Activated naive CD4-positive, alpha-beta T cell treated with anti-CD3 and anti-CD28 coated beads, Interleukin-2, amount 10 ng/mL, durations not matched to agents 7 days and 5 days (primary cell): ENCODE measurements at regions of chr12 and their contacts with region 1.

Region 1: GRCh38 chr12:109428037-109428629 is 49.0 kb downstream of the KCTD10 start:
- DNase-seq: peak; percentile 81
- H3K4me3 Mint-ChIP-seq: no peak overlapping the region
- H3K27ac Mint-ChIP-seq: no peak overlapping the region
- H3K4me1 Mint-ChIP-seq: peaks cover 6% of the 10 kb centered on the region
- H3K27me3 Mint-ChIP-seq: peaks cover 4% of the 10 kb centered on the region

Region 2: DNA sequence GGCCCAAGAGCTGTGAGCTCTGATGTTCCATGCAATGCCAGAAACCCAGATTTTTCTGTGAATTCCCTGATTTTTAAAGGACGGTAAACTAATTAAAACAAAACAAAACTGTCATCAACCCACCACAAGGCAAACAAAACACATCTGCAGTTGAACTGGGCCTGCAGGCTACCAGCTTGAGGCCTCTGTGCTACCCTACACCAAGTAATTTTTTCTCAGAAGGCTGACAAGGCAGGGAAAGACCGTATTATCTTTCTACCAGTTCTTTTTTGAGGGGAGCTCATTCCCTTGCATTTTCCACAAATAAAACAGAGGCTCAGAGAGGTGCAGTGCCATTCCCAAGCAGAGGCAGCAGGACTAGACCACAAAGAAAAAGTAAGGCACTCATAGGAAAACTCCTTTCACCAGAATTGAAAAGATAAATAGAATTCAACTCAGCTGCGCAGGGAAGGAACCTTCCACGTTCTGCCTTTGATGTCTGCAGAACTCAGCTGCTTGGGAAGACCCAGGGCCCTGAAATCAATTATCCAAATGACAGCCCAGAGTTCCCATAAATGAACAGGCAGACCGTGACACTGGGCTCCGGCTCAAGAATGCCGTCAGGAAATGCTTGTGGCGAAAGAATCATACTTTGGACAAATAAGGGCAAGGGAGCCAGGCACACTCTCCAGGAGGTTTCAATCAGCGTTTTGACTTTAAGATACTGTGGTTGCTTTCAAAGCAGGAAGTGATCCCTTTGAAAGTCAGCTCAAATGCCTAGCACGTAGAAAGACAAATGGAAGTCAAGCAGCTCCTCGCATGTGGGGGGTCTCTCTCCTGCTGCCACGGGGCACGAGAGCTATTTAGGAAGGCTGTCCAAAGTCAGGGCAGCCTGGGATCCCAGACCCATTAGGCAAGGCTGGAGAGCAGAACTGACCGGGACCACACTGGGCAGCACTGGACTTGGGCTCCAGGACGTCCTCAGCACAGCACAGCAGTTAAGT is 34.9 kb after region 1 on chr12:
- CTCF ChIA-PET with region 1: interaction called, 14 read pairs
- DNase-seq: peak; percentile 29
- H3K4me3 Mint-ChIP-seq: peak overlapping the region; percentile 24
- H3K27ac Mint-ChIP-seq: peak overlapping the region; percentile 83
- H3K4me1 Mint-ChIP-seq: peaks cover 43% of the 10 kb centered on the region
- H3K27me3 Mint-ChIP-seq: no peaks in the 10 kb centered on the region